Colonic mucosa (tissue), 4 donors: ENCODE measurements at regions of chr12 and their contacts with region 1.

Region 1: GRCh38 chr12:34022079-34022830 is at the start of gene ALG10:
- DNase-seq: peak; percentile 98
- H3K4me3 ChIP-seq: peak within 1 kb of the TSS; percentile 56
- H3K27ac ChIP-seq: peak within 1 kb of the TSS; percentile 59
- H3K4me1 ChIP-seq: no peaks in the 10 kb centered on the region
- H3K27me3 ChIP-seq: no peaks in the 10 kb centered on the region
- CTCF ChIP-seq: peak; percentile 43
- total RNA-seq, gene ALG10: 5.6 to 10.2 TPM

Region 2: GRCh38 chr12:32755654-32756475 is 1266.4 kb before region 1 on chr12 and contains the start of gene YARS2:
- intact Hi-C with region 1: loop called (anchors 5 kb)
- DNase-seq: peak; percentile 97
- H3K4me3 ChIP-seq: peak within 1 kb of the TSS; percentile 92
- H3K27ac ChIP-seq: peak within 1 kb of the TSS; percentile 95
- H3K4me1 ChIP-seq: no peaks in the 10 kb centered on the region
- H3K27me3 ChIP-seq: no peaks in the 10 kb centered on the region
- CTCF ChIP-seq: peak; percentile 78
- total RNA-seq, gene YARS2: 14.1 to 28.0 TPM

Region 3: DNA sequence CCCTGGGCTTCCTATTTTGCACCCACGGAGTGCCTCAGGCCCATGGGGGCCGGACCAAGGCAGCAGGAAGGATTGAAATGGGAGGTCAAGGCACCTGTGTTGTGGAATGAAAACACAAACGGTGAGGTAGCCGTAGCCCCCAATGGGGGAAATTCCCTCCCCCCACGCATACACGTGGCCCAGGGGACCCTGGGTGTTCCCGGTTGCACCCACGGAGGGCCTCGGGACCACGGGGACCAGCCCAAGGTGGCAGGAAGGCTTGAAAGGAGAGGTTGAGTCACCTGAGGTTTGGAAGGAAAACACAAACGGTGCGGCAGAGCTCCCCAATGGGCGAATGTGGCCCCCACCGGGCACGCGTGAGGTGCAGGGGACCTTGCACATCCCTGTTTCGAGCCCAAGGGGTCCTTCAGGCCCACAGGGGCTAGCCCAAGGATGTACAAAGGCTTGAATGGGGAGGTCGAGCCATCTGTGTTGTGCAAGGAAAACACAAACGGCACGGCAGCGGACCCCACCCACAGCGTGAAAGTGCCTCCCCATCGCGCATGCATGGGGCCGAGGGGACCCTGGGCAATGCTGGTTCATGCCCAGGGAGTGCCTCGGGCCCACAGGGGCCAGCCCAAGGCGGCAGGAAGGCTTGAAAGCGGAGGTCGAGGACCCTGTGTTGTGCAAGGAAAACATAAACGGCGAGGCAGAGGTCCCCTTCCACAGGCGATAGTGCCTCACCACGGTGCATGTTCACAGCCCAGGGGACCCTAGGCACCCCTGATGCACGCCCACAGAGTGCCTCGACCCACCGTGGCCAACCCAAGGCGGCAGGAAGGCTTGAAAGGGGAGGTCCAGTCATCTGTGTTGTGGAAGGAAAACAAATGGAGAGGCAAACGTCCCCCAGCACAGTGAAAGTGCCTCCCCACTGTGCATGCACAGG is 376.7 kb after region 1 on chr12:
- intact Hi-C with region 1: no loop called
- DNase-seq: peak; percentile 10
- H3K4me3 ChIP-seq: no peak overlapping the region
- H3K27ac ChIP-seq: no peak overlapping the region
- H3K4me1 ChIP-seq: no peaks in the 10 kb centered on the region
- H3K27me3 ChIP-seq: no peaks in the 10 kb centered on the region
- CTCF ChIP-seq: no peak